PC-3 (cell line): ENCODE measurements at regions of chr7 and their contacts with region 1.

Region 1: DNA sequence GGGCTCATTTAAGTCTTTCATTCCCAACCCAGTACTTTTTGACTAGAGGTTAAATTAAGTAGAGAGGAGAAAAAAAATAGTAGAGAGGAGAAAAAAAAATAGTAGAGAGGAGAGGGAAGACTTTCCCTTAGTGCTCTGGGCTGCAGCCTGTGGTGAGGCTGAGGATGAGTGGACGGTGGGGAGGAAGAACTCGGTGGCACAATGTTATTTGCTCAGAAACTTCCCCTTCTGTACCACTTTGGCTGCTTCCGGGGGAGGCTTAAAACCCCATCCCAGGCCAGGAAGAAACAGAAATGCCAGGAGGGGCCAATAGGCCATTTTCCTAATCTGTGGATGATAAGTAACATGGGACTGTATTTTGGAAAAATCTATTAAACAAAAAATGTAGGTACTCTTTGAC is 14.6 kb upstream of the MLXIPL start:
- DNase-seq: no peak
- ATAC-seq: no peak
- H3K4me3 ChIP-seq: no peak overlapping the region
- H3K27ac ChIP-seq: no peak overlapping the region
- H3K4me1 ChIP-seq: peaks cover 4% of the 10 kb centered on the region; the same call in 1 of the 2 replicates
- H3K27me3 ChIP-seq: no peaks in the 10 kb centered on the region
- CTCF ChIP-seq: no peak

Region 2: GRCh38 chr7:74026903-74027551 is 388.1 kb after region 1 on chr7:
- CTCF ChIA-PET with region 1: interaction called, 10 read pairs
- POLR2A ChIA-PET with region 1: no interaction called
- intact Hi-C with region 1: no loop called
- DNase-seq: peak; percentile 63
- ATAC-seq: peak; percentile 68
- H3K4me3 ChIP-seq: no peak overlapping the region
- H3K27ac ChIP-seq: no peak overlapping the region
- H3K4me1 ChIP-seq: peaks cover 12% of the 10 kb centered on the region
- H3K27me3 ChIP-seq: peaks cover 18% of the 10 kb centered on the region
- CTCF ChIP-seq: peak; percentile 92